CD8-positive, alpha-beta T cell (primary cell): ENCODE measurements at regions of chr9 and their contacts with region 1.

Region 1: GRCh38 chr9:35603987-35604577 is 980 bp upstream of the TESK1 start:
- DNase-seq: peak; percentile 98 to 100 (median 99)
- ATAC-seq: peak; percentile 91
- H3K4me3 ChIP-seq: peak overlapping the region; percentile 61 to 83
- H3K4me3 Mint-ChIP-seq: peak overlapping the region; percentile 93
- H3K27ac ChIP-seq: peak overlapping the region; percentile 61 to 83
- H3K27ac Mint-ChIP-seq: peak overlapping the region; percentile 93
- H3K4me1 ChIP-seq: peaks cover 23% of the 10 kb centered on the region
- H3K4me1 Mint-ChIP-seq: peaks cover 31% of the 10 kb centered on the region
- H3K27me3 ChIP-seq: no peaks in the 10 kb centered on the region
- H3K27me3 Mint-ChIP-seq: no peaks in the 10 kb centered on the region
- CTCF ChIP-seq: peak; percentile 92

Region 2: DNA sequence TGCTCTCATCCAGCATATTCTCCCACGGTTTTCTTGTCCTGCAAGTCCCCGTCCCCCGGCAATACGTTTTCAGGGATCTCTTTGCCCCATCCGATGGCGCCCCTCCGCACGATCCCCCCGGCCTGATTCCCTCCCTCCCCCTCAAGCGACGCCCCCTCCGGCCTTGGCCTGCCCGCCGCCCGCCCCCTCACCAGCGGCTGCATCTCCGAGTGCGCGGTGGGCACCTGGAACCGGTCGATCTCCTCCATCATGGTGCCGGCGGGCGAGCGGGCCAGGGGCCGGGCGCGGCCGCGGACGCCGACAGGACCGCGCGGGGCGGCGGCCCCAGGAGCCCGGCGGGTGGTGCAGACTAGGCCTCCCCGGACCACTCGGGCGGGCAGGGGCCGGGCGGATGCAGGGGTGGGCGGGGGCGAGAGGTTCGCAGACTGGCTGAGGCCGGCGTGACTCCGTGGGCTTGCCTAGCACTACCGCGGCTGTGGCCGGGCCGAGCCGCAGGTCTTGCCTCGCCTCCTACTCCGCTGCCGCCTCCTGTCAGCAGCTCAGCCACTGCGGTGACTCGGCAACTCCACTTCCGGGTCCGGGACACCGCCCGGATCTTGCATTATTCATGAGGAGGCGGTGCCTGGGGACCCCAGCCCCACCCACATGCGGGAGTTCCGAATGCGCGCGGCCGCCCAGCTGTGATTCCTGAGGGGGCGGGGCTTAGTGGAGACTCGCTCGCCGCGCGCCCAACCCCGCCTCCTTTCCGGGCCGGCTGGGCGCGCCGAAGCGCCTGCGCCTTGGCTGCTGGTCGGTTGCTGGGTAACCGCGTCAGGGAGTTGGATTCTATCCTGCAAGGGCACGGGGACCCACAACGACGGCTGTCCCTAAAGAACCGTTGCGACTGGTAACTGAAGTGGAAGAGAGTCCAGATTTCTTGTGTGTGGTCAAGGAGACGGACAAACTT is 1145.8 kb before region 1 on chr9 and contains the starts of genes DNAI1 and FAM219A:
- CTCF ChIA-PET with region 1: no interaction called
- POLR2A ChIA-PET with region 1: no interaction called
- intact Hi-C with region 1: loop called in 1 of 2 experiments (anchors 5 kb)
- DNase-seq: peak; percentile 98 to 99 (median 99)
- ATAC-seq: peak; percentile 96
- H3K4me3 ChIP-seq: peak within 1 kb of the TSS; percentile 61 to 67
- H3K4me3 Mint-ChIP-seq: peak within 1 kb of the TSS; percentile 91
- H3K27ac ChIP-seq: peak within 1 kb of the TSS in 1 of 2 experiments; percentile 29
- H3K27ac Mint-ChIP-seq: peak within 1 kb of the TSS; percentile 46
- H3K4me1 ChIP-seq: peaks cover 14% of the 10 kb centered on the region
- H3K4me1 Mint-ChIP-seq: peaks cover 30% of the 10 kb centered on the region
- H3K27me3 ChIP-seq: no peaks in the 10 kb centered on the region
- H3K27me3 Mint-ChIP-seq: no peaks in the 10 kb centered on the region
- CTCF ChIP-seq: no peak
- total RNA-seq, gene DNAI1: not detected
- total RNA-seq, gene FAM219A: 5.5 to 5.9 TPM

Region 3: DNA sequence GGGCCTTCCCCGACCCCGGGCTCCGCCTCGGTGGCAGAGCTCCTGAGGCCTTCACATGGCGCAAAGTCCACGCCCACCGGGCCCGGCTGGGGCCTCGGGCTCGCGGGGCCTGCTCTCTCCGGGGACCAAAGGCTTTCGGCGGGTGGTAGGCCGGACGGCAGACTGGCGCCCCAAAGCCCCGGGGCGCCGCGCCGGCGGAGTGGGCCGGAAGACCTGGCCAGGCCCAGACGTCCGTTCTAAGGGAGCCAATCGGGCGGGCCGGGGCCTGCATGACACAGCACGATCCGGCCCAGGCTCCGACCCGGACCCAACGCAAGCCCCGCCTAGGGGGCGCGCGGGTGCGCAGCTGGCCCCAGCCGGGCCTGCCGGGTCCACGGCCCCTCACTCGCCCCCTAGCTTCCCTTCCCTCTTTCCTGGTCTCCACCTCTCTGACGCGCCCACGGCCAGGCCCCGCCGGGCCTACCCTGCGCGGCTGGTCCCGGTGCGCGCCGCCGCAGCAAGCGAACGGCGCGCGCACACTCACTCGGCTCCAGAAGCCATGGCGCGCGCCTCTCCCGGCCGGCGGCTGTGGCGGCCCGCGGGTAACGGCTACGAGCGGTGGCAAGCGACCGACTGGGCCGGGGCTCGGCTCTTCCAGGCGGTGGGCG is 532.1 kb before region 1 on chr9:
- CTCF ChIA-PET with region 1: no interaction called
- POLR2A ChIA-PET with region 1: no interaction called
- intact Hi-C with region 1: loop called in 1 of 2 experiments (anchors 10 kb)
- DNase-seq: peak; percentile 40 to 87 (median 73)
- ATAC-seq: peak; percentile 49
- H3K4me3 ChIP-seq: peak overlapping the region; percentile 82 to 93
- H3K4me3 Mint-ChIP-seq: peak overlapping the region; percentile 93
- H3K27ac ChIP-seq: peak overlapping the region; percentile 91 to 94
- H3K27ac Mint-ChIP-seq: peak overlapping the region; percentile 97
- H3K4me1 ChIP-seq: peaks cover 49% of the 10 kb centered on the region
- H3K4me1 Mint-ChIP-seq: peaks cover 49% of the 10 kb centered on the region
- H3K27me3 ChIP-seq: no peaks in the 10 kb centered on the region
- H3K27me3 Mint-ChIP-seq: no peaks in the 10 kb centered on the region
- CTCF ChIP-seq: peak; percentile 43

Region 4: DNA sequence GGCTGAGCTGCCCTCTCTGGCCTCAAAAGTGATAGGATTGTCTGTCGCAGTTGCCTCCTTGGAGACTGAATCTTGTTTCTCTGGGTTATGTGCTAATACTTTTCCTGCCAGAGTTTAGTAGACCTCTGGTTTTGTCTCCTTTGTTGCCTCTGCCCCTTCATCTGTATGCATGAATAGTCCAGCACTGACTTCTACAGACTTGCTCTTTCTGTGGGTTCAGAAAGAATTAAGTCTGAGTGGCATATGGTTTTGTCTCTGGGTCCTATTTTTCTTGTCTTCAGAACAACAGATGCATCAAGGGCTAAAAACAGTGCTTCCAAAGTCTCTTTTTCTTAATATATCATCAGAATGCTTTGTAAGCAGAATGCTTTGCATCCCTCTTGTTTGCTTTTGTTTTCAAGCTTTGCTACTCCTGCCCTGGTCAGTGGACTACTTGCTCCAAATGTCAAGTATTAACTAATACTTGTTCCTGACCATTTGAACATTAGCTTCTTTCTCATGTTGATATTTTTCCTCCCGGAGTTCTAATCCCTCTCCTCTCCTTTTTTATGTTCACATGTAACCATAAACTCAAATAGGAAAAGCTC is 310.6 kb before region 1 on chr9:
- CTCF ChIA-PET with region 1: no interaction called
- POLR2A ChIA-PET with region 1: no interaction called
- intact Hi-C with region 1: no loop called
- DNase-seq: no peak
- ATAC-seq: no peak
- H3K4me3 ChIP-seq: no peak overlapping the region
- H3K4me3 Mint-ChIP-seq: no peak overlapping the region
- H3K27ac ChIP-seq: no peak overlapping the region
- H3K27ac Mint-ChIP-seq: no peak overlapping the region
- H3K4me1 ChIP-seq: no peaks in the 10 kb centered on the region
- H3K4me1 Mint-ChIP-seq: no peaks in the 10 kb centered on the region
- H3K27me3 ChIP-seq: no peaks in the 10 kb centered on the region
- H3K27me3 Mint-ChIP-seq: peaks cover 11% of the 10 kb centered on the region
- CTCF ChIP-seq: no peak

Region 5: GRCh38 chr9:35616681-35617459 is 12.8 kb after region 1 on chr9:
- CTCF ChIA-PET with region 1: interaction called, 10 read pairs
- POLR2A ChIA-PET with region 1: interaction called, 12 read pairs
- intact Hi-C with region 1: loop called in 1 of 2 experiments (anchors 1 kb)
- DNase-seq: peak; percentile 22 to 92 (median 73)
- ATAC-seq: peak; percentile 74
- H3K4me3 ChIP-seq: peak overlapping the region; percentile 44 to 60
- H3K4me3 Mint-ChIP-seq: peak overlapping the region; percentile 85
- H3K27ac ChIP-seq: peak overlapping the region; percentile 36 to 93
- H3K27ac Mint-ChIP-seq: peak overlapping the region; percentile 92
- H3K4me1 ChIP-seq: peaks cover 34% of the 10 kb centered on the region
- H3K4me1 Mint-ChIP-seq: peaks cover 39% of the 10 kb centered on the region
- H3K27me3 ChIP-seq: no peaks in the 10 kb centered on the region
- H3K27me3 Mint-ChIP-seq: no peaks in the 10 kb centered on the region
- CTCF ChIP-seq: peak; percentile 22

Region 6: GRCh38 chr9:35696525-35697215 is 92.6 kb after region 1 on chr9:
- CTCF ChIA-PET with region 1: interaction called, 147 read pairs
- POLR2A ChIA-PET with region 1: interaction called, 3 read pairs
- intact Hi-C with region 1: loop called (anchors 1 kb)
- DNase-seq: peak; percentile 34 to 78 (median 60)
- ATAC-seq: peak; percentile 97
- H3K4me3 ChIP-seq: no peak overlapping the region
- H3K4me3 Mint-ChIP-seq: no peak overlapping the region
- H3K27ac ChIP-seq: peak overlapping the region in 1 of 2 experiments; percentile 22
- H3K27ac Mint-ChIP-seq: peak overlapping the region; percentile 62
- H3K4me1 ChIP-seq: no peaks in the 10 kb centered on the region
- H3K4me1 Mint-ChIP-seq: peaks cover 6% of the 10 kb centered on the region
- H3K27me3 ChIP-seq: no peaks in the 10 kb centered on the region
- H3K27me3 Mint-ChIP-seq: no peaks in the 10 kb centered on the region
- CTCF ChIP-seq: peak; percentile 83

Region 7: GRCh38 chr9:35814841-35815543 is 210.9 kb after region 1 on chr9 and contains the start of gene HINT2:
- CTCF ChIA-PET with region 1: interaction called, 3 read pairs
- POLR2A ChIA-PET with region 1: interaction called, 3 read pairs
- intact Hi-C with region 1: loop called (anchors 1 kb)
- DNase-seq: peak; percentile 95 to 99 (median 97)
- ATAC-seq: peak; percentile 79
- H3K4me3 ChIP-seq: peak within 1 kb of the TSS; percentile 76 to 96
- H3K4me3 Mint-ChIP-seq: peak within 1 kb of the TSS; percentile 97
- H3K27ac ChIP-seq: peak within 1 kb of the TSS; percentile 74 to 86
- H3K27ac Mint-ChIP-seq: peak within 1 kb of the TSS; percentile 87
- H3K4me1 ChIP-seq: peaks cover 31% of the 10 kb centered on the region
- H3K4me1 Mint-ChIP-seq: peaks cover 36% of the 10 kb centered on the region
- H3K27me3 ChIP-seq: no peaks in the 10 kb centered on the region
- H3K27me3 Mint-ChIP-seq: no peaks in the 10 kb centered on the region
- CTCF ChIP-seq: no peak
- total RNA-seq, gene HINT2: 10.0 to 13.6 TPM

Region 8: DNA sequence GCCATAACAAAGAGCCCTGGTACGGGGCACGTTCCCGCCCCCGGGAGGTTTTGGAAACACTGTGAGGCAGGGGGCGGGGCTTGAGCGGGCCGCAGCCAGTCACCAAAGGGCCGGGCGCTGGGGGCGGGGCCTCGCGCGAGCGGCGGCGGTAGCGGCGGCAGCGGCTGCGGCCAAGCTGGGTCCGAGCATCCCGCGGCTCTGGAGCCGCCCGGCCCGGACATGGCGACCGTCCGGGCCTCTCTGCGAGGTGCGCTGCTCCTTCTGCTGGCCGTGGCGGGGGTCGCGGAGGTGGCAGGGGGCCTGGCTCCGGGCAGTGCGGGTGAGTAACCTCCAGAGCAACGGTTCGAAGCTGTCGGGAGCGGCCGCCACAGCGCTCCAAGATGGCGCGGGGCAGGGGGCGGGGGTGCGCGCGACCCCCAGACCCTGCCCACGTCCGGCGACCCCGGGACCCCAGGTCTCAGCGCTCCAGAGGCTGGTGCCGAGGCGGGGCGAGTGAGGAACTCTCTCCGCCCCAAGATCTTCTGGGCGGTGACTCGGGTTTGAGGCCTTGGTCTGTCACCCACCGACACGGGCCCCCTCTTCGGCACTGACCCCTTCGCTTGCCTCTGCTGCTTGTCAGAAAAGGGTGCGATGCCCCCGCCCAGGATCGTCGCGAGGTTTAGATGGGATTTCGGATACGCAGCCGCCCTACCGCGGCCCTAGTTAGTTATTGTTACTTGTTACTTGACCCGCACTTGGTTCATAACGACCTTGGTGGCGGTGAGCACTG is 432.9 kb after region 1 on chr9 and contains the start of gene RECK:
- CTCF ChIA-PET with region 1: no interaction called
- POLR2A ChIA-PET with region 1: no interaction called
- intact Hi-C with region 1: loop called in 1 of 2 experiments (anchors 10 kb)
- DNase-seq: peak; percentile 63 to 90 (median 85)
- ATAC-seq: peak; percentile 96
- H3K4me3 ChIP-seq: peak within 1 kb of the TSS; percentile 71 to 77
- H3K4me3 Mint-ChIP-seq: peak within 1 kb of the TSS; percentile 86
- H3K27ac ChIP-seq: peak within 1 kb of the TSS; percentile 16 to 37
- H3K27ac Mint-ChIP-seq: peak within 1 kb of the TSS; percentile 78
- H3K4me1 ChIP-seq: peaks cover 32% of the 10 kb centered on the region
- H3K4me1 Mint-ChIP-seq: peaks cover 43% of the 10 kb centered on the region
- H3K27me3 ChIP-seq: no peaks in the 10 kb centered on the region
- H3K27me3 Mint-ChIP-seq: peaks cover 3% of the 10 kb centered on the region
- CTCF ChIP-seq: no peak
- total RNA-seq, gene RECK: 5.0 to 6.3 TPM